Posterior cingulate gyrus (tissue), 11 donors: ENCODE measurements at regions of chr17 and their contacts with region 1.

Region 1: DNA sequence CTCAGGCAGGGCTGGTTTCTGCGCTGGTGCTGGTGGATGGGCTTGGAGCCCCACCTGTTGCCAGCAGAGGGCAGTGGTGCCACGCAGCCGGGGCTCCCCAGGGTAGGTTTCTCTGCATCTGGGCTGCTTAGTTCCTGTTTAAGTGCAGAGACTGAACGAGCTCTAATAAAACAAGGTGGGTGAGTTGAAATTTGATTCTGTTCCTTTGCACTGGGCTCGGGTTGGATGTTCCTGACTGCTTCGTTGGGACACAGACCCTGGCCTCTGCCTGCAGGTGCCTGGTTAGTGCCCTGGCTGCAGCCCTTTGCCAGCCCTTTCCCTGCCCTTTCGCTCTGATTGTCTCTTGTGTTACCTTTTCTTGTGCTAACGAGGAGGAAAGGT is 30.0 kb downstream of the TBCD start:
- DNase-seq: peak; percentile 61 to 97 (median 83)

Region 2: DNA sequence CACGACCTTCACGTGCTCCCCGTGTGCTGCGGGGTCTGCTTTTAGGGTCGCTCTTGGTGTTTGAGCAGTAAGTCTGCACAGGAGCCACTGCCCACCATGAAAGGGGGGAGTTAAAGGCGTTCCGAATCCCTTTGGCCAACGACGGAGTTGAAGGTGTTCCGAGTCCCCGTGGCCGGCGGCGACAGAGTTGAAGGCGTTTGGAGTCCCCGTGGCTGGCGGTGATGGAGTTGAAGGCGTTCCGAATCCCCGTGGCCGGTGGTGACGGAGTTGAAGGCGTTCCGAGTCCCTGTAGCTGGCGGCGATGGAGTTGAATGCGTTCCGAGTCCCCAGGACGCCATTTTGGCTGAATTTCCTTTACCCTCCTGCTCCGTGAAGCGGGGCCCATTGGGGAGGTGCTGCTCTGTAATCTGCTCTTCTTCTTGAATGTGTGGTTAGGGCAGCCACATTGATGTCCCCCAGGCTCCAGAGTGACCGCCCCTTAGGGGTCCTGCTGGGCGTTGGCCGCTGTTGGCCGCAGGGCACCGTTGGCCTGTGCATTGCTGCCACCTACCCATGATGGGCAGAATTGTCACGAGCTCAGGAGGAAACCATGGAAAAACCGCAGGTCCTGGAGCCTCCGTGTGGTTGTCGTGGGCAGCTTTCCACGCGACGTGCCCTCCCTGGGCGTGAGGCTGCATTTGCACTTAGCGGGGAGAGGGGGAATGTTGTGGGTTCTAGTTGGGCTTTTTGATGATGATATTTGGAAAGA is 131.6 kb after region 1 on chr17:
- intact Hi-C with region 1: loop called (anchors 5 kb)
- DNase-seq: no peak

Region 3: DNA sequence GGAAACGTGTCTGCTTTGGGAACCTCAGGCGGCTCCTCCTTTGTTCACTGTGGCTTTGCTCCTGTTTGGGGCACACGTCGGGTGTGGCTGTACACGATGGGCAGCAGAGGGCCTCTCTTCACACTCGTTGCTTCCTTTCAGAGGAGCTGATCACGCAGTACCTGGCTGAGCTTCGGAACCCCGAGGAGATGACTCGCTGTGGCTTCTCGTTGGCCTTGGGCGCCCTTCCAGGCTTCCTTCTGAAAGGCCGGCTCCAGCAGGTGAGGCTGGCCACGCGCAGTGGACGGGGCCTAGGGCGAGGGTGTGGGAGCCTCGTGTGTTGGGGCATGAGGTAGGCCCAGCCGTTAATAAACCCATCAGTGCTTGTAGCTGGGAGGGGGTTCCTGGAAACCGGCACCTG is 142.9 kb after region 1 on chr17:
- intact Hi-C with region 1: no loop called
- DNase-seq: peak in 3 of 10 donors; percentile 59 to 80 (median 67)